Activated CD4-positive, alpha-beta memory T cell treated with anti-CD3 and anti-CD28 coated beads, Interleukin-2, amount 10 ng/mL, durations not matched to agents 7 days and 5 days (primary cell): ENCODE measurements at regions of chr12 and their contacts with region 1.

Region 1: DNA sequence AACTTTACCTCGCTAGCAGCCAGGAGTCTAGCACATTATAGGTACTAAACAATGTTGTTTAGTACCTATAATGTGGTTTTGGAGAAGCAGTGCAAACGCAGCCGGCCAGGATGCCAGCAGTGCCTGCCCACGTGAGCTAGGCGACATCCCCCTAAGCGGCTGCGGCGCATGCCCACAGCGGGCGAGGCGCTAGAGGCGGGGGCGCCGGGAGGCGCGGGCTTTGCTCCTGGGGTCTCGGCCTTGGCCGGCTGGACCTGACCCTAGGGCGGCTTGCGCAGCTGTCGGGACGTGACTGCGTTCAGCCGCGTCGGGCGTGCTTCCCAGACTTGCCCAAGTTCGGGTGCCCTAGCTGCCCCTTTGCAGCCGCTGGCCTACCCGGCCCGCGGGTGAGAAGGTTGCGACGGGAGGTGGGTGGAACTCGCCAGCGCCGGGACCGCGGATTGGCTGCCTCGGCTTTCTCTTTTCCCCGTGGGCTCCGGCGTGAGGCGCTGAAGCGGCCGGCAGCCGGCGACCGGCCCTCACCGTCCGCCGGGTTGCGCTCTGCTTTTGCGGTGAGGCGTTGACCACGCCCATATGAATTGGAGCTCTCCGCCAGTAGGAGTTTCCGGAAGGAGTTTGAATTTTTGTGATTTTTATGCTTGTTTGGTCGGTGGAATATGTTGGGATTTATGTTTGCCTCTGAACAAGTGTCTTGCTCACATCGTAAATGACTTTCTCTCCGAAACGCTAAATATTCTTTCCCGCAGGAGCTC is at the start of gene TMEM19:
- DNase-seq: peak; percentile 86
- H3K4me3 Mint-ChIP-seq: peak within 1 kb of the TSS; percentile 85
- H3K27ac Mint-ChIP-seq: peak within 1 kb of the TSS; percentile 91
- H3K4me1 Mint-ChIP-seq: peaks cover 36% of the 10 kb centered on the region
- H3K27me3 Mint-ChIP-seq: no peaks in the 10 kb centered on the region
- total RNA-seq, gene TMEM19: 15.5 to 16.1 TPM

Region 2: GRCh38 chr12:71636704-71637115 is 49.4 kb before region 1 on chr12:
- CTCF ChIA-PET with region 1: interaction called, 8 read pairs
- POLR2A ChIA-PET with region 1: interaction called, 10 read pairs
- DNase-seq: no peak
- H3K4me3 Mint-ChIP-seq: no peak overlapping the region
- H3K27ac Mint-ChIP-seq: no peak overlapping the region
- H3K4me1 Mint-ChIP-seq: peaks cover 14% of the 10 kb centered on the region
- H3K27me3 Mint-ChIP-seq: no peaks in the 10 kb centered on the region

Region 3: GRCh38 chr12:71671816-71672215 is 14.3 kb before region 1 on chr12:
- CTCF ChIA-PET with region 1: interaction called, 15 read pairs
- POLR2A ChIA-PET with region 1: interaction called, 26 read pairs
- DNase-seq: no peak
- H3K4me3 Mint-ChIP-seq: no peak overlapping the region
- H3K27ac Mint-ChIP-seq: no peak overlapping the region
- H3K4me1 Mint-ChIP-seq: peaks cover 10% of the 10 kb centered on the region
- H3K27me3 Mint-ChIP-seq: peaks cover 3% of the 10 kb centered on the region

Region 4: GRCh38 chr12:71708658-71709057 is 22.6 kb after region 1 on chr12:
- CTCF ChIA-PET with region 1: no interaction called
- POLR2A ChIA-PET with region 1: interaction called, 10 read pairs
- DNase-seq: no peak
- H3K4me3 Mint-ChIP-seq: no peak overlapping the region
- H3K27ac Mint-ChIP-seq: no peak overlapping the region
- H3K4me1 Mint-ChIP-seq: peaks cover 20% of the 10 kb centered on the region
- H3K27me3 Mint-ChIP-seq: peaks cover 14% of the 10 kb centered on the region

Region 5: DNA sequence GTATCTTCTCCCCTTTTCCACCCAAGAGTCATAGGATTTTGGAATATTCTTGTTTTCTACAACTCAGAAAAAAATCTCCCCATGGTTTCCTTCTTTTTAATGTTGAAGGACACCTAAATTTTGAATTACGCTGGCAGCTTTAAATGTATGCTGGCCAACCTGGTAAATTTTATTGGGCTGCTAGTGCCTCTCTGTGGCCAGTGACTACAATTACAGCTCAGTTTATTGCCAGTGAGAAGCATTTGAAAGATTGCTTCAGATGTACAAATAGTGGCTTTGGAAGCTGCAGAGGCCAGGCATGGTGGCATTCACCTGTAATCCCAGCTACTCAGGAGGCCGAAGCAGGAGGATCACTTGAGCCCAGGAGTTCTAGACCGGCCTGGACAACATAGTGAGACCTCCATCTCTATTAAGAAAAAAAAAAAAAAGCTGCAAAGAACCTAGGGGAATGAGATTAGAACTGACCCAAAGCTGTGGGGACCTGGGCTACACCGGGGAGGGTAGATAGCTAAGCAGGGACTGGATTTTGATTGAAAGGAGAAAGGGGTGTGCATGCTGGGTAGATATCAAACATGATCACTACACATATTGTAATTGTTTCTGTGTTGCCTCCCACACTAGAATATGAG is 61.0 kb after region 1 on chr12:
- CTCF ChIA-PET with region 1: interaction called, 15 read pairs
- POLR2A ChIA-PET with region 1: interaction called, 6 read pairs
- DNase-seq: peak; percentile 48
- H3K4me3 Mint-ChIP-seq: no peak overlapping the region
- H3K27ac Mint-ChIP-seq: no peak overlapping the region
- H3K4me1 Mint-ChIP-seq: no peaks in the 10 kb centered on the region
- H3K27me3 Mint-ChIP-seq: peaks cover 48% of the 10 kb centered on the region

Region 6: GRCh38 chr12:71754461-71755145 is 68.5 kb after region 1 on chr12 and contains the start of gene RAB21:
- CTCF ChIA-PET with region 1: interaction called, 19 read pairs
- POLR2A ChIA-PET with region 1: interaction called, 24 read pairs
- DNase-seq: peak; percentile 99
- H3K4me3 Mint-ChIP-seq: peak within 1 kb of the TSS; percentile 88
- H3K27ac Mint-ChIP-seq: peak within 1 kb of the TSS; percentile 90
- H3K4me1 Mint-ChIP-seq: peaks cover 31% of the 10 kb centered on the region
- H3K27me3 Mint-ChIP-seq: peaks cover 21% of the 10 kb centered on the region
- total RNA-seq, gene RAB21: 65.0 to 67.3 TPM

Region 7: DNA sequence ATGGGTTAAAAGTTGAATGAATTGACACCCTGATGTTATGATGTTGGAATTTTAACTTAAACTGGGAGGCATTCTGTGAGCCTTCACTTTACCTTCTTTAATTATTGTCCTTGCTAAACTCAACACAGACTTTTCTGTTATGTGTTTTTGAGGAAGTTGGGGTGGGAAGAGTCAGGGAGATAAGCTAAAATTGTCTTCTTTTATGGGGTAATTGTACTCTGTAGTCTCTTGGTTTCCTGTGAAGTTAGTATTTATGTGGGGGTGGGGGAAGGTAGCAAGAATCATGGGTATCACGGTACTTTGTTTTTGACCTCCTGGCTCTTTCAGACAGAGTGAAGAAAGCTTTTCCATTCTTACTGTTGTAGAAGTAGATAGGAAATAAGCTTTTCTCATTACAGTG is 101.5 kb after region 1 on chr12:
- CTCF ChIA-PET with region 1: no interaction called
- POLR2A ChIA-PET with region 1: no interaction called
- DNase-seq: no peak
- H3K4me3 Mint-ChIP-seq: no peak overlapping the region
- H3K27ac Mint-ChIP-seq: no peak overlapping the region
- H3K4me1 Mint-ChIP-seq: peaks cover 6% of the 10 kb centered on the region
- H3K27me3 Mint-ChIP-seq: no peaks in the 10 kb centered on the region

Region 8: DNA sequence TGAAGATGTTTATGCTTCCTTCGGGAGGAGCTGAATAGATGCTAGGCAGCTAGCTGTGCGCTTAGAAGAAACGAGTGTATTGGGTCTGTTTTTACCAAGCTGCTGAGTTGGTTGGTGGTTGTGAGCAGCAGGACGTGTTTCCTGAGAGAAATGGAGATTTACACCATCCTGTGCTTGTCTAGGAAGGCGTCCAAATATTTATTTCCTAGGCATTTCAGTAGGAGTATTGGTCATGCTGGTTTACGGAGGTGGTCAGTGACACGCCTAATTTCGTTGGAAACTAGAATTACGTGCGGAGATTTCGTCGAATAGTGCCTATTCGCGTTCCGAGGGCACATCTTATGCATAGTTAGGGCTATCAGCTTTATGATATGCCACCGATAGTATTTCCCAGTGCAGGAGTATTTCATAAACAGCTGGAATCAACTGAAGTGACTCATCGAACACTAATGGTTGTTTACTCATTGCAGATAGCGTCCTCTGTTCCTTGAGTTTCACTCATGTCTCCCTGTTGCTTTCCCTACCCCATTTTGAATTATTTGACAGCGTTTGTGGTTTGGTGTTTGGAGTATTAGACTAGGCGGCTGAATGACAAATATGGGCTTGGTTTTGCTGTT is 154.2 kb after region 1 on chr12:
- CTCF ChIA-PET with region 1: no interaction called
- POLR2A ChIA-PET with region 1: interaction called, 24 read pairs
- DNase-seq: peak; percentile 22
- H3K4me3 Mint-ChIP-seq: peak overlapping the region; percentile 92
- H3K27ac Mint-ChIP-seq: peak overlapping the region; percentile 97
- H3K4me1 Mint-ChIP-seq: peaks cover 37% of the 10 kb centered on the region
- H3K27me3 Mint-ChIP-seq: no peaks in the 10 kb centered on the region